ENCODE measurements at regions of chr15 and their contacts with region 1.

Region 1: GRCh38 chr15:66323312-66323928 is 30.1 kb downstream of the DIS3L start:
- DNase-seq: no peak
- H3K27ac ChIP-seq: peak overlapping the region; percentile 8
- CTCF ChIP-seq: no peak

Region 2: GRCh38 chr15:66293419-66294156 is 29.8 kb before region 1 on chr15 and contains the start of gene DIS3L:
- CTCF ChIA-PET with region 1: no interaction called
- POLR2A ChIA-PET with region 1: no interaction called
- DNase-seq: peak; percentile 55
- H3K27ac ChIP-seq: peak within 1 kb of the TSS; percentile 98
- CTCF ChIP-seq: no peak

Region 3: GRCh38 chr15:66726371-66726770 is 403.0 kb after region 1 on chr15:
- CTCF ChIA-PET with region 1: interaction called, 10 read pairs
- POLR2A ChIA-PET with region 1: no interaction called
- DNase-seq: no peak
- H3K27ac ChIP-seq: no peak overlapping the region
- CTCF ChIP-seq: no peak